OCI-LY7 (cell line): ENCODE measurements at regions of chr9 and their contacts with region 1.

Region 1: DNA sequence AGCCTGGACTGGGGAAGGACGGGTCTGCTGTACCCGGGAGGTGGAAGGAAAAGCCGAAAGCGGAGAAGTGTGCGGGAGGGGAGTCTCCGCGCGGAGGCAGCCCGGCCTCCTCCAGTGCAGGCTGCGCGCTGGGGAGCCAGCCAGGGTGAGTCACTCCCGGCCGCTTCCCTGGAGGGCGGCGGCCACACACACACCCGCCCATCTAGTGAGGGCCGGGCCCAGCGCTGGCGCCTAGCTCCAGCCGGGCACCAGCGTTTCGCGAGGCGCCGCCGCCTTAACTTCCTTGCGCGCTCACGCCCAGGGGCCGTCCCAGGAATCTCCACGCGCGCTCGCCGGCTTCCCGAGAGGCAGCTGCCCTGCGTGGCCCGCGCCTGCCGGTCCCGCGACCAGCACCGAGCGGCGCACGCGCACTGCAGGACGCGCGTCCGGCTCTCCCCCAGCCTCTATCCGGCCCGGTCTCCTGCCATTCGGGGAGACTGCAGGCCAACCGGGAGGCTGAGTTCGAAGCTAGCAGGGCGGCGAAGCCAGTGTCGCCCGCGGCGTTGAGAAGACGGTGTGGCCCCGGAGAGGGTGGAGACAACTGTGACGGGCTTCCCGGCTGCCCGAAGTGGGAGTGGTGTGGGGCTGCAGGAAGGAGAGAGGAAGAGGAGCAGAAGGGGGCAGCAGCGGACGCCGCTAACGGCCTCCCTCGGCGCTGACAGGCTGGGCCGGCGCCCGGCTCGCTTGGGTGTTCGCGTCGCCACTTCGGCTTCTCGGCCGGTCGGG is at the start of gene JAK2:
- DNase-seq: peak; percentile 87
- H3K4me3 ChIP-seq: peak within 1 kb of the TSS; percentile 72
- H3K27ac ChIP-seq: peak within 1 kb of the TSS; percentile 72
- H3K4me1 ChIP-seq: peaks cover 31% of the 10 kb centered on the region
- CTCF ChIP-seq: peak; percentile 49
- total RNA-seq, gene JAK2: 3.7 and 4.4 TPM in 2 replicates

Region 2: DNA sequence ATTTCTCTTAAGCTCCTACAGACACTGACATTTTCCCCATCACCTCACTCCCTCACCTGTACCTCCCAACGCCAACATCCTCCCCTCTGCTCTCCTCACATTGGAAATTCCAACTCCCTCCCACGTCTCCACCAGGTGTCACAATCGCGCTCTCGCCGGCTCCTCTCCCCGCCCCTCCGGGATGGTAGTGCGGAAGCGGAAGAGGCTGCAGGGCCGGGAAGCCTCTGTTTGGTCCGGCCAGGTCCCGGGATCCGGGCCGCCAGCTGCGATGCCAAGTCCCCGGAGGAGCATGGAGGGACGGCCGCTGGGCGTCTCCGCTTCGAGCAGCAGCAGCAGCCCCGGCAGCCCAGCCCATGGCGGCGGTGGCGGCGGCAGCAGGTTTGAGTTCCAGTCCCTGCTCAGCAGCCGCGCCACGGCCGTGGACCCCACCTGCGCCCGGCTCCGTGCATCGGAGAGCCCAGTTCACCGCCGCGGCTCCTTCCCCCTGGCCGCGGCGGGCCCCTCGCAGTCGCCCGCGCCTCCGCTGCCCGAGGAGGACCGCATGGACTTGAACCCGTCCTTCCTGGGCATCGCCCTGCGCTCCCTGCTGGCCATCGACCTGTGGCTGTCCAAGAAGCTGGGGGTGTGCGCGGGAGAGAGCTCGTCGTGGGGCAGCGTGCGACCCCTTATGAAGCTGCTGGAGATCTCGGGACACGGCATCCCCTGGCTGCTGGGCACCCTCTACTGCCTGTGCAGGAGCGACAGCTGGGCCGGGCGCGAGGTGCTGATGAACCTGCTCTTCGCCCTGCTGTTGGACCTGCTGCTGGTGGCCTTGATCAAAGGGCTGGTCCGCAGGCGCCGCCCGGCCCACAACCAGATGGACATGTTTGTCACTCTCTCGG is 322.5 kb before region 1 on chr9 and contains the start of gene PLPP6:
- CTCF ChIA-PET with region 1: no interaction called
- POLR2A ChIA-PET with region 1: no interaction called
- intact Hi-C with region 1: loop called (anchors 5 kb)
- DNase-seq: peak; percentile 75
- H3K4me3 ChIP-seq: peak within 1 kb of the TSS; percentile 77
- H3K27ac ChIP-seq: no peak within 1 kb of the TSS
- H3K4me1 ChIP-seq: peaks cover 23% of the 10 kb centered on the region
- CTCF ChIP-seq: peak; percentile 66
- total RNA-seq, gene PLPP6: 2.5 and 4.6 TPM in 2 replicates

Region 3: DNA sequence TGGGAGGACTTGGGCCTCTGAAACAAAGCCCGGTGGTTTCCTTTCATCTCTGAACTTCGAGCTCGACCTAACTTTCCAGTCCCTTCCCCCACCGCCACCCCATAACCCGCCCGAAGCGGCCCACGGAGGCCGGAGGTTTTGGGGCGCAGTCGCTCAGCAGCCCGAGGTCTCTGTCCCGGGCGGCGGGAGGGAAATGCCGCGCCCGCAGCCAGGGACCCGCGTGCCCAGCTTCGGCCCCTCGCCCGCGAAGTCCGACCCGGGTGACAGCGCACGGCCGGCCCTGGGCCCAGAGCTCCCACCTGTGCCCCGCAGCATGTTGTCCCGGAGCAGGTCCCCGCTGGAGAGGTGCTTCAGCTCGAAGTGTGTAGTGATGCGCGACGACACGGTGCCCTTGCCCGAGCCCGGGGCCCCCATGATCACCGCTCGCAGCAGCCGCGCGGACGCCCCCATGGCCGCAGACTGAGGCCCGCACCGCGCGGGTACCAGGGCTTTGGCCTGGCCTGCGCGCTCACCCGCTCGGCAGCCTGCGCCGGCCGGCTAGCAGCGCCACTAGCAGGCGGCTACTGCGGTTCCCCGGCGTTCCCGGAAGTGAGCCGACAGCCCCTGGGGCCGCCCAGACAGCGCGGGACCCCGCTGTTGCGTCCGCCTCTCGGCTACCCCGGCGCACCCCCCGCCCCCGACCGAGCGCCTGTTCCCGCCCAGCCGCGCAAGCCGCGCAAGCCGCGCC is 244.0 kb before region 1 on chr9 and contains the start of gene AK3:
- CTCF ChIA-PET with region 1: no interaction called
- POLR2A ChIA-PET with region 1: interaction called, 4 read pairs
- intact Hi-C with region 1: loop called (anchors 1 kb)
- DNase-seq: peak; percentile 94
- H3K4me3 ChIP-seq: peak within 1 kb of the TSS; percentile 86
- H3K27ac ChIP-seq: peak within 1 kb of the TSS; percentile 61
- H3K4me1 ChIP-seq: peaks cover 23% of the 10 kb centered on the region
- CTCF ChIP-seq: peak; percentile 49
- total RNA-seq, gene AK3: 64.4 and 108 TPM in 2 replicates

Region 4: DNA sequence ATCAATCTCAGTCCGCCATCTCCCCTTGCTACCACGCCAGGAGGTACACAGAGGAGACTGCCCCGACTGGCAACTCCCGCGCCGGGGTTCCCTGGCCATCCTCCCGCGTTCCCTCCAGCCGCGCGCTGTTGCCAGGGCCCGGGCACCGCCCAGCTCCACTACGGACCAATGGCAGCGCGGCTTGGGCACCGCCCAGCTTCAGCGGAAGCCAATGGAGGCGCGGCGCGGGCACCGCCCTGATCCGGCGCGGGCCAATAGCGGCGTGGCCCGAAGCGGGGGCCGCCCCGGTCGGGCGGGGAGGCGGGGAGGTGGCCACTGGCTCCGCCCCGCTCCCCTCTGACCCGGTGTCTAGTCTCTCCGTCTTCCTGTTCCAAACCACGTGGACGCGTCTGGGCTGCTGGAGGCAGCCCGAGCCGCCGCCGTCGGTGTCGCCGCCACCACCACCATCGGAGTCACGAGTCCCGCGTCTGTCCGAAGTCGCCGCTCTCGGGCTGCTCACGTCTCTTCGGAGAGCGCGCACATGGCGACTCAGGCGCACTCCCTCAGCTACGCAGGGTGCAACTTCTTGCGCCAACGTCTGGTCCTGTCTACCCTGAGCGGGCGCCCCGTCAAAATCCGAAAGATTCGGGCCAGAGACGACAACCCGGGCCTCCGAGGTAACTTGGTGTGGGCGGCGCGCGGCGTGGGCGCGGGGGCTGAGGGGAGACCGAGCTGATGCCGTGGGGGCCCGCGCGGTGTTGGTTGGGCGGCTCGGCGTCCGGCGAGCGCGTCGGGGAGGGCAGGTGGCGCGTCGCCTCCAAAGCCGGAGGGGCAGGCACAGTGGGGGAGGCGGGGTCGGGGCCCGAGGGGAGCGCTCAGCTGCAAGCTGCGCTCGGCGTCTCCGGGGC is 192.0 kb before region 1 on chr9 and contains the start of gene RCL1:
- CTCF ChIA-PET with region 1: no interaction called
- POLR2A ChIA-PET with region 1: interaction called, 5 read pairs
- intact Hi-C with region 1: loop called (anchors 1 kb)
- DNase-seq: peak; percentile 97
- H3K4me3 ChIP-seq: peak within 1 kb of the TSS; percentile 80
- H3K27ac ChIP-seq: peak within 1 kb of the TSS; percentile 45
- H3K4me1 ChIP-seq: peaks cover 27% of the 10 kb centered on the region
- CTCF ChIP-seq: no peak
- total RNA-seq, gene RCL1: 25.0 and 27.5 TPM in 2 replicates

Region 5: DNA sequence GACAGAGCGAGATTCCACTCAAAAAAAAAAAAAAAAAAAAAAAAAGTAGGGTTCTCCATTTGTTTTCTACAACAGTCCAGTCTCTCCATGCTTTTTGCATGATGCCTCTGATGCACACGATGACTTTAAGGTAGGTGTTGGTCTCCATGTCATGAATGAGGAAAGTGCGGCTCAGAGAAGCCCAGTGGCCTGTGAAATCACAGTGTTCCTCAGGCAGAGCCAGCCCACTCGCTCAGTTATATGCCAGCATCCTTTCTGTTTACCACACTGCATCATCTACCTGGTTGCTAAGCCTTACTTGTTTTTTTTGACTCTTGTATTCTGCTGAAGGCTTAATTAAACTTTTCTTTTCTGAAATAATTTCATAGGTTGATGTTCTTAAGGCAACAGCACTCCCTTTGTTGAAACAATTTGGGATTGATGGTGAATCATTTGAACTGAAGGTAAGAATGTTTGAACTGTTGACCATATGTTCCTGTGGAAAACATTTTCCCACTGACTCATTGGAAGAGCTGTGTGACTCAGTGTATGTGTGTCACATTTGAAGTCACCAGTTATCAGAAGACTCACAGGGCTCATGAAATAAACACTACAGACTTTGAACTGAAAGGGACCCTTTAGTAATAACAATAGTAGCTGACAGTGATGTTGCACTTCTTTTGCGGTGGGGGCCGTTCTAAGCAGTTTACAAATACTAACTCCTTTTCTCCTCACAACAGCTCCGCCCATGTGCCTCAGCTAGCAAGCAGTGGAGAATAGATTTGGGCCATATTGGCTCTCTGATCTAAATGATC is 151.8 kb before region 1 on chr9:
- CTCF ChIA-PET with region 1: no interaction called
- POLR2A ChIA-PET with region 1: no interaction called
- intact Hi-C with region 1: no loop called
- DNase-seq: no peak
- H3K4me3 ChIP-seq: no peak overlapping the region
- H3K27ac ChIP-seq: no peak overlapping the region
- H3K4me1 ChIP-seq: no peaks in the 10 kb centered on the region
- CTCF ChIP-seq: no peak

Region 6: GRCh38 chr9:4923580-4924544 is 60.9 kb before region 1 on chr9:
- CTCF ChIA-PET with region 1: no interaction called
- POLR2A ChIA-PET with region 1: interaction called, 3 read pairs
- intact Hi-C with region 1: loop called (anchors 5 kb)
- DNase-seq: peak; percentile 55
- H3K4me3 ChIP-seq: no peak overlapping the region
- H3K27ac ChIP-seq: no peak overlapping the region
- H3K4me1 ChIP-seq: peaks cover 4% of the 10 kb centered on the region
- CTCF ChIP-seq: peak; percentile 83

Region 7: GRCh38 chr9:5832543-5833529 is 848.0 kb after region 1 on chr9 and contains the start of gene ERMP1:
- CTCF ChIA-PET with region 1: no interaction called
- POLR2A ChIA-PET with region 1: interaction called, 3 read pairs
- intact Hi-C with region 1: loop called (anchors 10 kb)
- DNase-seq: peak; percentile 88
- H3K4me3 ChIP-seq: peak within 1 kb of the TSS; percentile 89
- H3K27ac ChIP-seq: peak within 1 kb of the TSS; percentile 70
- H3K4me1 ChIP-seq: peaks cover 43% of the 10 kb centered on the region
- CTCF ChIP-seq: peak; percentile 88
- total RNA-seq, gene ERMP1: 7.9 and 11.1 TPM in 2 replicates